ENCODE measurements at regions of chr18 and their contacts with region 1.

Region 1: GRCh38 chr18:48754993-48755473 is 195.7 kb downstream of the SMAD7 start:
- DNase-seq: no peak
- ATAC-seq: no peak
- H3K4me3 ChIP-seq: no peak overlapping the region
- H3K27ac ChIP-seq: peak overlapping the region in 2 of 10 donors; percentile 26 to 31
- H3K4me1 ChIP-seq: peaks cover 9 to 55% (median 42%) of the 10 kb centered on the region in 9 donors
- H3K27me3 ChIP-seq: no peaks in the 10 kb centered on the region
- CTCF ChIP-seq: no peak

Region 2: DNA sequence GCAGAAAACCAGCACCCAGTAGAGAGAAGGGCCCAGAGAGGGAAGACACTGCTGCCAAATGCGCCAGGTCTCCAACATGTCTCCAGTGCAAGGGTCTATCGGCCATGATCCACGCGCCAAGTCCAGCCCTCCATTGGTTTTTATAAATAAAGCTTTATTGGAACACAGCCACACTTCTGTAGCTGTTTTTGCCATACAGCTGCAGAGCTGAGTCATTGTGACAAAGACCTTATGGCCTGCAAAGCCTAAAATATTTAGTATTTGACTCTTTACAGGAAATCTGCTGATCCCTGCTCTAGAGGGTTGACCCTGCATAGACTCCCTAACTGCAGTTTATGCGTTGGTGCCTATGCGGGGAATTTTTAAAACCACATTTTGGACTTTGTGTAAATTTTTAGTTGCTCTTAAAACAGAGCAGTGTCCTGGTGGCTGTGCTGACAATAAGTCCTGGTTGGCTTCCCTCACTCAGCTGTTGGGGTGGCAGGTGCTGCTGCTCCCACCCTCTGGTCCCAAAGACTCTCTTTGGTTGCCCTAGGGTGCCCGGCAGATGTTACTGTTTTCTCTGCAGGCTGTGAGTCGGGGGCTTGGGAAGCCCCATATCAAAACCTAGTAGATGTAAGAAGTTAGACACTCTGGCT is 61.3 kb before region 1 on chr18:
- intact Hi-C with region 1: no loop called
- DNase-seq: no peak
- ATAC-seq: no peak
- H3K4me3 ChIP-seq: no peak overlapping the region
- H3K27ac ChIP-seq: peak overlapping the region in 3 of 10 donors; percentile 2 to 47 (median 21)
- H3K4me1 ChIP-seq: peaks cover 0 to 74% (median 33%) of the 10 kb centered on the region in 9 donors
- H3K27me3 ChIP-seq: no peaks in the 10 kb centered on the region
- CTCF ChIP-seq: no peak

Region 3: DNA sequence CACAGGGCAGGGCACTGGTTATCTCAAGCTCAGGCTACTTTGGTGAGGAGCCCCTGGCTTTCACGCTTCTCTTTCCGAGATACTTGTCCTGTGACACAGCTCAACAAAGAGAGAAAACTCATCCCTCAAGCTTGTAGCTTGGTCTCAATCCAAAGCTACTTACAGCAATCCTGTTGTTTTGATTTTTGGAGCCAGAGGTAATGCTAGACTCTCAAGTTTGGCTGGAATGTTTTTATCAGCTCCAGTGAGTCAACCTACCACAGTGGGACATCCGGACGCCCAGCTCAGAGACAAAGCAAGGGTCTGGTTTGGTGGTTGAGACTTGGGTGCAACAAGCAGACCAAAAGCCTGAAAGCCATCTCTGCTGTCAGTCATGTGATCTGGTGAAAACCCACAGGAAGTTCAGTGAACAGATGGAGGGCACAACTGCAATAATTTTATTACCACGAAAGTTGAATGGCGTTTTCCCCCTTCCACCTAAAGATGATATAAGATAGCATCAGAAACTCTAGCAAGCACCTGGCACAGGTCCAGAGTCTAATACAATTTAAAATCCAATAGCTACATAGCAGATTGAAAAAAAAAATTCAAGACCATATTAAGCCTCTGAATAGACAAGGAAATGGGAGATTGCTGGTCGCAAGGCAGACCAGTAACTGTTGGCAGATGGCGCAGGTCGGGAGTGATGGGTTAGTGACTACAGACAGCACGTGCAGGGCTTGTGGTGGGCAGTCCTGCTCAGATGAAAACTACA is 298.0 kb after region 1 on chr18:
- intact Hi-C with region 1: loop called in 1 of 10 experiments (anchors 1 kb)
- DNase-seq: no peak
- ATAC-seq: peak in 4 of 8 donors; percentile 15 to 47 (median 25)
- H3K4me3 ChIP-seq: no peak overlapping the region
- H3K27ac ChIP-seq: peak overlapping the region in 5 of 10 donors; percentile 17 to 64 (median 51)
- H3K4me1 ChIP-seq: peaks cover 8 to 41% (median 16%) of the 10 kb centered on the region in 9 donors
- H3K27me3 ChIP-seq: no peaks in the 10 kb centered on the region
- CTCF ChIP-seq: no peak

Measured in heart right ventricle (tissue), 16 donors.